Endothelial cell of umbilical vein (primary cell): ENCODE measurements at regions of chr3 and their contacts with region 1.

Region 1: GRCh38 chr3:192409357-192409824 is 317.9 kb downstream of the FGF12 start:
- DNase-seq: peak; percentile 57
- H3K4me3 ChIP-seq: peak overlapping the region; percentile 51 to 78 (median 63)
- H3K27ac ChIP-seq: no peak overlapping the region
- H3K4me1 ChIP-seq: peaks cover 20% of the 10 kb centered on the region
- H3K27me3 ChIP-seq: peaks cover 0 to 3% of the 10 kb centered on the region in 2 experiments
- CTCF ChIP-seq: no peak
- POLR2A ChIP-seq: no peak

Region 2: DNA sequence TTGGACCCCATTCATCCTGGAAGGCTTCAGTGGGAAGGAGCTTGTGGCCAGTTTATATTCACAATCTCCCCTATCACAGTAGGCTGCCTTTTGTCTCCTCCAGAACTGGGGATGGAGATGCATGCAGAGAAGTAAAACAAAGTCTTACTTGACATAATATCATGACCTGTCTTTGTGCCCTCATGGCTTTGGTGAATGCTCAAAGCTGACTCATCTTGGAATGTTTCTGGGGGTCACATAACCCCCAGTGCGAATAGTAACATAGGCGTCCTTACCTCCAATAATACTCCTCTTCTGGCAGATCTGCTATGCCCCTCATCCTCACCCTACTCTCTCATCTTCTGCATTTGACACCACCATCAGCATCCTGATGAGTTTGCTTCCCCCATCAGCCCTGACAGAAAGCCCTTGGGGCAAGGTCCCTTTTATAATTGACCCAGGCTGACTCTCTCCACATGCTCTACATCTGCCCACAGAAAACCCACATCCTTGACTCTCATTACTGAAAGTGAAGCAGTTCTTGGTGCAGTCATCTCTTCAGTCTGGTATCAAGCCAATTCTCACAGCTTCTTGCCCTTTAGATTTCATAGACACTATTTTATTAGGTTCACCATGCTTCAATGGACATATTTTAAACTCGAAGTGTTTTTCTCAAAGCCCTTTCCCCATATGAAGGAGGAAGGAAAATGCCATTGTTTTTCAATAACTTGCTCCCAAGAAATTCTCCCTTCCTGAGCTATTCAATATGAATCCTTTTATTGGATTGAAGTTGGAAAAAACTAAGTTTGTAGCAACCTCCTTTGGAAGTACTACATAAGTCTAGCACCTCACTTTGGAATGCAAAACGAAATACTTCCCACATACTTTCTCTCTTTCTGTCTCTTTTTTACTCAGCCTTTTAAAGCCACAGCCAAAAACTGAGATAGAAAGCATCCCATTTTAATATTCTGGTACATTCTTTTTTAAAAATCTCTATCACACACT is 1173.8 kb before region 1 on chr3:
- CTCF ChIA-PET with region 1: no interaction called
- POLR2A ChIA-PET with region 1: no interaction called
- dilution Hi-C with region 1: no loop called
- intact Hi-C with region 1: loop called (anchors 10 kb)
- DNase-seq: no peak
- H3K4me3 ChIP-seq: no peak overlapping the region
- H3K27ac ChIP-seq: no peak overlapping the region
- H3K4me1 ChIP-seq: peaks cover 42% of the 10 kb centered on the region
- H3K27me3 ChIP-seq: no peaks in the 10 kb centered on the region
- CTCF ChIP-seq: no peak
- POLR2A ChIP-seq: no peak

Region 3: DNA sequence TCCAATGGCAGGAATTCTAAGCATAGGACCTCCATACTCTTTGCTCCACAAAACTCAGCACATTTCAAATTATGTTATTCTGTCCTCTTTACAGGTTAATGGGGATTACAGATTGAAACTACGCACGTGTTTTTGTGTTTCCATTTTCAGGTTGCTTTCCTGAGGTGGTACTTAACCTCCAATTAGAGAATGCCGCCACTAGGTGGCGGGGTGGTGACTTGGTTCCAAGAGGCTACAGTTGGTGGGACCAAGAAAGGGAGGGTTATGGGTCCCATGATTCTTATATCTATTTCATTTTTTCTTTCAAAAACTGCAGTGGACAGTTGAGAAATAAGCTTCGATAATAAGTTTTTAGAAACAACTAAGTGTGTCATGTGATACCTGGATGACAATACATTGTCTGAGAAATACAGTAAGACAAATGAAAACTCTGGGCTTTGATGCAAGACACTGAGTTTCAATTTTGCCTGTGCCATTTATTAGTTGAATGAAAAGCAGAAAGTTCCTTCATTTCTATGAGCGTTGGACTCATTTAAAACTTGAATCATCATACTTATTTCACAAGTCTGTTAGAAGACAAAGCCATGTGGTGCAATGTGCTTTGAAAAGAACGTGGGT is 221.1 kb before region 1 on chr3:
- CTCF ChIA-PET with region 1: no interaction called
- POLR2A ChIA-PET with region 1: no interaction called
- dilution Hi-C with region 1: no loop called
- intact Hi-C with region 1: loop called (anchors 5 kb)
- DNase-seq: peak; percentile 46
- H3K4me3 ChIP-seq: no peak overlapping the region
- H3K27ac ChIP-seq: no peak overlapping the region
- H3K4me1 ChIP-seq: peaks cover 13% of the 10 kb centered on the region
- H3K27me3 ChIP-seq: no peaks in the 10 kb centered on the region
- CTCF ChIP-seq: peak; percentile 72 to 73
- POLR2A ChIP-seq: no peak